GM12878 (cell line): ENCODE measurements at regions of chr1 and their contacts with region 1.

Region 1: GRCh38 chr1:152869808-152870419 is 8.2 kb upstream of the SMCP start:
- DNase-seq: peak; percentile 40
- ATAC-seq: peak; percentile 97
- H3K4me3 ChIP-seq: no peak overlapping the region
- H3K27ac ChIP-seq: no peak overlapping the region
- H3K4me1 ChIP-seq: peaks cover 19% of the 10 kb centered on the region
- H3K27me3 ChIP-seq: peaks cover 0 to 2% of the 10 kb centered on the region in 2 experiments; a peak in 1 of 4 replicates
- CTCF ChIP-seq: peak; percentile 78 to 84 (median 84)
- EP300 ChIP-seq: no peak
- POLR2A ChIP-seq: no peak
- RAD21 ChIP-seq: peak; percentile 88

Region 2: DNA sequence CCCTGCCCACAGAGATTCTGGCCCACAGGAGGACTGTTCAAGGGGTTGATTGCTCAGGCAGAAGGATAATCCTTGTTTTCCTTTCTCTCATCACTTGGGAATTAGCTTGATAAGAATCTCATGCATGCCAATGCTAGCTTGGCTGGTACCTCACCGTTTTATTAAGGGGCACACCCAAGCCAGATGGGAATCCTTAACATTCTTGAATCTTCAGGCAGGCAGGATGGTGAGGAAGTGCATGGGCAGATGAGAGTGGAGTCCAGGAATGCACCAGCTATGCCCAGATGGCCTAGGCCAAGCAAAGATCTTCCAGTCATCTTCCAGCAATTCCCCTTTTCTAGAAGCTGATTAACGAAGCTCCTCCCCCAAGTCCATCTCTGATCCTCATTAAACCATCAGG is 14.3 kb before region 1 on chr1:
- CTCF ChIA-PET with region 1: interaction called, 10 read pairs
- POLR2A ChIA-PET with region 1: no interaction called
- RAD21 ChIA-PET with region 1: no interaction called
- SMC1A ChIA-PET with region 1: interaction called, 4 read pairs
- in situ Hi-C with region 1: no loop called
- intact Hi-C with region 1: no loop called
- DNase-seq: no peak
- ATAC-seq: no peak
- H3K4me3 ChIP-seq: no peak overlapping the region
- H3K27ac ChIP-seq: no peak overlapping the region
- H3K4me1 ChIP-seq: no peaks in the 10 kb centered on the region
- H3K27me3 ChIP-seq: no peaks in the 10 kb centered on the region
- CTCF ChIP-seq: no peak
- EP300 ChIP-seq: no peak
- POLR2A ChIP-seq: no peak
- RAD21 ChIP-seq: no peak

Region 3: DNA sequence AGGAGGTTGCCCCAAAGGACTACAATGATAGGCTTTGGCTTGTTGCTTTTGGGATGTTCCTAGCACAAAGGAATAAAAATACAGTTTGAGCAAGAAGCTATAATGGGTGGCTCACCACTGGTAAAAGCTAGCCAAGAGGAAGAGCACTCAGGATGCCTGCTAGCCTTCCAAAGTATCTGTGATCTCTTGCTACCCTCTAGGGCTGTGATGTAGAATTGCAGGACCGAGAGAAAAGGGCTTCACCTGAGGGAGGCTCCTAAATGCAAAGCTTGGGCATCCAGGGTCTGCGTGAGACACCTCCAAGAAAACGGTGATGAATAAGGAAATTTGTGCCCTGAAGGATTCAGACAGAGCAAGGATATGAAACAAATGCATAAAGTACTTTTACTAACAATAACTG is 56.2 kb after region 1 on chr1:
- CTCF ChIA-PET with region 1: interaction called, 106 read pairs
- POLR2A ChIA-PET with region 1: no interaction called
- RAD21 ChIA-PET with region 1: interaction called, 60 read pairs
- SMC1A ChIA-PET with region 1: interaction called, 64 read pairs
- in situ Hi-C with region 1: loop called (anchors 5 kb)
- intact Hi-C with region 1: loop called (anchors 1 kb)
- DNase-seq: no peak
- ATAC-seq: peak; percentile 87
- H3K4me3 ChIP-seq: no peak overlapping the region
- H3K27ac ChIP-seq: no peak overlapping the region
- H3K4me1 ChIP-seq: no peaks in the 10 kb centered on the region
- H3K27me3 ChIP-seq: peaks cover 0 to 2% of the 10 kb centered on the region in 2 experiments; a peak in 1 of 4 replicates
- CTCF ChIP-seq: peak; percentile 74 to 80 (median 78); a peak in 5 of 6 replicates
- EP300 ChIP-seq: no peak
- POLR2A ChIP-seq: no peak
- RAD21 ChIP-seq: peak; percentile 99

Region 4: DNA sequence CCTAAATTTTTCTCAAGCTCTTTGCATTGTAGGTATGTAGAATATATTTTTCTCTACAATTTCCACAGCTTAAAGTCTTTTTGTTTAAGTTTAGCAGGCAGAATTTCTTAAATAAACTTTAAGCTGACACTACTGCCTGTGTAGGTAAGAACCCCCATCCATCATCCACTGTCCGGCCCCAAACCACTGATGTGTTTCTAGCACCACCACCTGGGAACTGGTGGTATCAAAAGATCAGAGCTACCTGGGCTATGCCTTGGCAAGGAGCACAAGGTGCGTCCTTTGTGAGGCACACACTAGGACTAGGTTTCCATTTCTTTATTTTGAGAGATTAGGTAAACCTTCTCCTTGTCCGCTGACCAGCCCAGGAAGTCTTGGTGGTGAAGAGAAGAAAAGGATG is 322.8 kb after region 1 on chr1:
- CTCF ChIA-PET with region 1: interaction called, 94 read pairs
- POLR2A ChIA-PET with region 1: interaction called, 3 read pairs
- RAD21 ChIA-PET with region 1: interaction called, 32 read pairs
- SMC1A ChIA-PET with region 1: interaction called, 49 read pairs
- in situ Hi-C with region 1: loop called (anchors 10 kb)
- intact Hi-C with region 1: loop called (anchors 1 kb)
- DNase-seq: no peak
- ATAC-seq: peak; percentile 77
- H3K4me3 ChIP-seq: no peak overlapping the region
- H3K27ac ChIP-seq: no peak overlapping the region
- H3K4me1 ChIP-seq: no peaks in the 10 kb centered on the region
- H3K27me3 ChIP-seq: no peaks in the 10 kb centered on the region; a peak in 1 of 4 replicates
- CTCF ChIP-seq: peak; percentile 44 to 57 (median 46); a peak in 5 of 6 replicates
- EP300 ChIP-seq: no peak
- POLR2A ChIP-seq: no peak
- RAD21 ChIP-seq: peak; percentile 83

Region 5: DNA sequence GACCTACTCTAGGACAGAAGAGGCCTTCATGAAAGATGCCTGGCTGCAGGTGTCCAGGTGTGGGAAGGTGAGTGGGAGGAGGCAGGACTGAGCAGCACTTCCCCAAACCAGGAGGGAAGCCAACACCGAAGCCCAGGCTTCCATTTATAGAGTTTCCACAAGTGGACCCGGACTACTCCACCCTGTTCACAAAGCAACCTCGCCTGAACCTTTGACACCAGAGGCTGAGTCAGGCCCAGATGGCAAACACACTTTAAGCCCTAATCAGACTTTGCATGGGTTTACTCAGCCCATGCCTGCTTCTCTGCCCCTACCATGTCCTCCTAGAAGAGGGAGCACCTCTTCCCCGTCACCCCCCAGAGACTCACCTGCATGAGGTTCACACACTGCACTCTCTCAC is 361.4 kb after region 1 on chr1:
- CTCF ChIA-PET with region 1: interaction called, 36 read pairs
- POLR2A ChIA-PET with region 1: no interaction called
- RAD21 ChIA-PET with region 1: interaction called, 4 read pairs
- SMC1A ChIA-PET with region 1: interaction called, 5 read pairs
- in situ Hi-C with region 1: loop called (anchors 5 kb)
- intact Hi-C with region 1: no loop called
- DNase-seq: no peak
- ATAC-seq: no peak
- H3K4me3 ChIP-seq: no peak overlapping the region
- H3K27ac ChIP-seq: no peak overlapping the region
- H3K4me1 ChIP-seq: no peaks in the 10 kb centered on the region
- H3K27me3 ChIP-seq: no peaks in the 10 kb centered on the region; a peak in 1 of 4 replicates
- CTCF ChIP-seq: no peak
- EP300 ChIP-seq: no peak
- POLR2A ChIP-seq: no peak
- RAD21 ChIP-seq: no peak